Sigmoid colon (tissue), 7 donors: ENCODE measurements at regions of chr16 and their contacts with region 1.

Region 1: GRCh38 chr16:79601931-79602627 is 1.5 kb upstream of the MAF start:
- DNase-seq: peak; percentile 87
- H3K4me3 ChIP-seq: peak overlapping the region; percentile 45 to 76 (median 69)
- H3K27ac ChIP-seq: peak overlapping the region; percentile 87 to 94 (median 90)
- H3K4me1 ChIP-seq: peaks cover 0 to 29% (median 17%) of the 10 kb centered on the region in 4 donors
- H3K27me3 ChIP-seq: no peaks in the 10 kb centered on the region
- CTCF ChIP-seq: peak; percentile 62 to 83 (median 78)
- EP300 ChIP-seq: no peak
- POLR2A ChIP-seq: no peak

Region 2: DNA sequence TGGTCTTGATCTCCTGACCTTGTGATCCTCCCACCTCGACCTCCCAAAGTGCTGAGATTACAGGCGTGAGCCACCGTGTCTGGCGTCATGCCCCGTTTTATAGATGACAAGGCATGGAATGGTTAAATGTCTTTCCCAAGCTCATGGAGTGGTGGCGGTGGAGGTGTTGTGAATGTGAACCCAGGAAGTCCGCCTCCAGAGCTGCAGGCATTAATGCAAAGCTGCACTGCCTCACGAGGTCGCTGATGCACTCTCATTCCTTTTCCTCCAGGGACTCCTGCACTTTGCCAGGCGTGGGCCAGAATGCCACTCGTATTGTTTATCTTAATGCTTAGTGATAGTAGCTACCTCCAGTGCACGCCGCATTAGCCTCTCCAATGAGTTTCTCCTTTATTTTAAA is 1353.0 kb before region 1 on chr16:
- intact Hi-C with region 1: loop called (anchors 5 kb)
- DNase-seq: no peak
- H3K4me3 ChIP-seq: no peak overlapping the region
- H3K27ac ChIP-seq: no peak overlapping the region
- H3K4me1 ChIP-seq: no peaks in the 10 kb centered on the region
- H3K27me3 ChIP-seq: no peaks in the 10 kb centered on the region
- CTCF ChIP-seq: no peak
- EP300 ChIP-seq: no peak
- POLR2A ChIP-seq: no peak

Region 3: DNA sequence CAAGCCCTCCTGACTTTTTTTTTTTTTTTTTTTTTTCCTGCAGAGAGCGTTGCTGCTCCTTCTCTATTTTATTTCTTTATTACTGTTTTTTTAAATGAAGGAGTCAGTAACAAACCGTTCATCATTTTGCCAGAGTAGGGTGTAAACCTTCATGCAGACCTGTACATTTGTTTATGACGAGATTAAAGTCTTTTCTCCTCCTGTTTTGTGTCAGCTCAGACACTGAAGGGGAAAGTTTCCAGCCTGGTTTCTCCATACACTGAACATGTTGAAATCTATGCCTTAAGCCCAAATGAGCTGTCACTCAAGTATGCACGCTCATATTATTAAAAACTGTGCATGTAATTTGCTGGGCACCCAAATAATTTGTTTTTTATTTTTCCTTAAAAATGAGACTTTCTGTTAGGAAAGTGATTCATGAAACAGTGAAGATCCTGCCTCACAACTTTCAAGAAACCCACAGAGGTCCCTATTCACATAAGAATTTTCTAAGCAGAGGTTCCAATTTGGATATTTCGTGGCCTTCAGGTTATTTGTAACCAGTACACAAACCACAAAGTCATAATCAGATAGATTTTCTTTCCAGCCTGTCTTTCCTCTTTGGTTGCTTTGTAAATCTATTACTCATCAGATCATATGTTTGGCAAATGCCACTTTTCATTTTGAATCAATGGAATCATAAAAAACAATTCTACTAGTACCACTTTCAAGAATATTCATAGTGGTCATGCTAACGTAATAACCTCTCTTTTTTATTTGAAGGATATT is 701.9 kb before region 1 on chr16:
- intact Hi-C with region 1: loop called (anchors 10 kb)
- DNase-seq: no peak
- H3K4me3 ChIP-seq: no peak overlapping the region
- H3K27ac ChIP-seq: no peak overlapping the region
- H3K4me1 ChIP-seq: peaks cover 0 to 18% (median 5%) of the 10 kb centered on the region in 4 donors
- H3K27me3 ChIP-seq: no peaks in the 10 kb centered on the region
- CTCF ChIP-seq: no peak
- EP300 ChIP-seq: peak in 1 of 4 donors; percentile 37
- POLR2A ChIP-seq: no peak

Region 4: DNA sequence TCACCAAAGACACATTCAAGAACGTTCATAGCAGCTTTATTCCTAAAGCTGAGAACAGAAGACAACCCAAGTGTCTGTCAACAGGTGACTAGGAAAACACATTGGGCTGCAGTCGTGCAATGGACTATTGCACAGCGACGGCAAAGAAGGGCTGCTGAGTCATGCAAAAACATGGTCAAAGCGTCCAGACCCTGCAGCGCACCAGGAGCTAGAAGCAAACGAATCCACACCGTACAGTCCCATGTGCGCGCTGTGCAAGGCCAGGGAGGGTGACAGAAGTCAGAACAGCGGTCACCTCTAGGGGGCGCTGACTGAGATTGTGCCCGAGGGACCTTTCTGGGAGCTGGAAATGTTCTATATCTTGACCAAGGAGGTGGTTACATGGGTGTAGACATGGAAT is 268.0 kb before region 1 on chr16:
- intact Hi-C with region 1: loop called (anchors 5 kb)
- DNase-seq: no peak
- H3K4me3 ChIP-seq: no peak overlapping the region
- H3K27ac ChIP-seq: no peak overlapping the region
- H3K4me1 ChIP-seq: peaks cover 0 to 31% (median 15%) of the 10 kb centered on the region in 4 donors
- H3K27me3 ChIP-seq: no peaks in the 10 kb centered on the region
- CTCF ChIP-seq: no peak
- EP300 ChIP-seq: no peak
- POLR2A ChIP-seq: no peak

Region 5: GRCh38 chr16:79928142-79928873 is 326.2 kb after region 1 on chr16:
- intact Hi-C with region 1: loop called (anchors 5 kb)
- DNase-seq: no peak
- H3K4me3 ChIP-seq: no peak overlapping the region
- H3K27ac ChIP-seq: peak overlapping the region in 1 of 4 donors; percentile 69
- H3K4me1 ChIP-seq: peaks cover 0 to 31% (median 23%) of the 10 kb centered on the region in 4 donors
- H3K27me3 ChIP-seq: no peaks in the 10 kb centered on the region
- CTCF ChIP-seq: no peak
- EP300 ChIP-seq: no peak
- POLR2A ChIP-seq: no peak

Region 6: GRCh38 chr16:80526425-80527061 is 924.5 kb after region 1 on chr16:
- intact Hi-C with region 1: loop called (anchors 10 kb)
- DNase-seq: no peak
- H3K4me3 ChIP-seq: no peak overlapping the region
- H3K27ac ChIP-seq: no peak overlapping the region
- H3K4me1 ChIP-seq: peaks cover 0 to 5% (median 0%) of the 10 kb centered on the region in 4 donors
- H3K27me3 ChIP-seq: peaks cover 0 to 13% (median 0%) of the 10 kb centered on the region in 3 donors
- CTCF ChIP-seq: peak; percentile 52 to 85 (median 63)
- EP300 ChIP-seq: no peak
- POLR2A ChIP-seq: no peak